ENCODE measurements at regions of chr17 and their contacts with region 1.

Region 1: GRCh38 chr17:14300575-14301278 is at the start of gene HS3ST3B1:
- H3K4me3 Mint-ChIP-seq: peak within 1 kb of the TSS; percentile 85
- H3K27ac Mint-ChIP-seq: peak within 1 kb of the TSS; percentile 77
- H3K4me1 Mint-ChIP-seq: peaks cover 62% of the 10 kb centered on the region
- H3K27me3 Mint-ChIP-seq: peaks cover 64% of the 10 kb centered on the region

Region 2: DNA sequence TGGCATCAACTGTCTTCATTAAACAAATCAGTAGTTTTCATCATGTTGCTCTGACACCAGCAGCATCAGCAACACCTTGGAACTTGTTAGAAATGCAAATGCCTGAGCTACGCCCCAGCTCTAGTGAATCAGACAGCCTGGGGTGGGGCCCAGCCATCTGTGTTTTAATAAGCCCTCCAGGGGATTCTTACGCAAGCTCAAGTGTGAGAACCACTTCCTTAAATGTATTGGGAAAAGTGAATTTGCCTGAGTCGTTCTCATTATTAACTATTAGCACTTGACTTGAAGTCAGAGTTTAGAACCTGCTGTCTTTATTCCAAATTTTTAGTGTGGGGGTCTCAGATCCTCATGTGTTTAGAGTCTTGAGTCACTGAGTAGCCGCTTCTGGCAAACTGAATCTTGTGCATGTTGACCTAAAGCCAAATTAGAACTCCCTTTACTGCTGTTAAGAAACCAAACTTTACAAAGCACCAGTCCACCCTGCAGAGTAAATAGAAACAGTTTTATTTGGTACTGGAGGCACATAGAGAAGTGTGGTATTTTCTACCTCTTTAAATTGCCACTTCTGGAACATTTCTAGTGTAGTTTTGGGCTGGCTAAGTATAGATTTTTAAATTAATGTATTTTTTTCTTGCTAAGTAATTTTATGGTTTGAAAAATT is 368.8 kb before region 1 on chr17:
- intact Hi-C with region 1: loop called (anchors 2 kb)
- H3K4me3 Mint-ChIP-seq: no peak overlapping the region
- H3K27ac Mint-ChIP-seq: peak overlapping the region; percentile 91
- H3K4me1 Mint-ChIP-seq: peaks cover 40% of the 10 kb centered on the region
- H3K27me3 Mint-ChIP-seq: no peaks in the 10 kb centered on the region

Region 3: DNA sequence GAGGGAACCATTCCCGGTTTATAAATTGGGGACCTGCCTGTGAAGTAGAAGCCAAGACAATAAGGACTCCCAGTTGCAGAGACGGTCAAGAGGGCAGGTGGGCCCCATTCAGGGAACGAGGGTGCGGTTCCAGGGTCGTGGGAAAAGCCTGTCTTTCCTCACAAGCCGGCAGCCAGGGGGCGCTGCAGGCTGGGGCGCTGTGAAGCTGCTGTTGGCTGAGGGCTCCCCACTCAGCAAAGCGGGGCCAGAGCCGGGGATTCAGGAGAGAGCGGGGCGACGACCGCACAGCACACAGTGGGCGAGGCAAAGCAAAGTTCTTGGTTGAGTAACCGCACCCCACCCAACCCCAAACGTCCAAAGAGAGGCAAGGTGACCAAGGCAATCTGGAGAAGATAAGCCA is 88.9 kb before region 1 on chr17:
- intact Hi-C with region 1: loop called (anchors 5 kb)
- H3K4me3 Mint-ChIP-seq: no peak overlapping the region
- H3K27ac Mint-ChIP-seq: no peak overlapping the region
- H3K4me1 Mint-ChIP-seq: peaks cover 29% of the 10 kb centered on the region
- H3K27me3 Mint-ChIP-seq: peaks cover 2% of the 10 kb centered on the region

Region 4: DNA sequence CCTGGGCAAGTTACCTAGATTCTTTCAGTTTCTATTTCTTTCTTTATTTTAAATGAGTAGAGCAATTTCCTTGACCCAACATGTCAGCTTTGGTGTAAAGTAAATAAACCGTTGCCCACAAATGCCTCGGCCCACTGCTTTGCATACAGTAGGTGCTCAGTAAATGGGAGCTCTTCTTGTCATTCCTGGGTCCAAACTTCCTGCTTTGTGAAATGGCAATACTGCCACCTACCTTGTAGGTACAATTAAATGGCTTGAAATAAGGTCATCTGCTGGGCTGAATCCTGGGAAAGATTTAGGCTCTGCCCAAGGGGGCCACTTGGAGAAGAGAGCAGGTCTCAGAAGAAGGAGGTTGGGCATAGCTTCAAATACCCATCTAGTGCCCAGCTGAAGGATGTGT is 253.1 kb after region 1 on chr17:
- intact Hi-C with region 1: loop called (anchors 5 kb)
- H3K4me3 Mint-ChIP-seq: no peak overlapping the region
- H3K27ac Mint-ChIP-seq: no peak overlapping the region
- H3K4me1 Mint-ChIP-seq: peaks cover 23% of the 10 kb centered on the region
- H3K27me3 Mint-ChIP-seq: peaks cover 1% of the 10 kb centered on the region

Region 5: GRCh38 chr17:14748031-14748710 is 447.4 kb after region 1 on chr17:
- intact Hi-C with region 1: loop called (anchors 10 kb)
- H3K4me3 Mint-ChIP-seq: no peak overlapping the region
- H3K27ac Mint-ChIP-seq: peak overlapping the region; percentile 43
- H3K4me1 Mint-ChIP-seq: peaks cover 44% of the 10 kb centered on the region
- H3K27me3 Mint-ChIP-seq: no peaks in the 10 kb centered on the region

Region 6: DNA sequence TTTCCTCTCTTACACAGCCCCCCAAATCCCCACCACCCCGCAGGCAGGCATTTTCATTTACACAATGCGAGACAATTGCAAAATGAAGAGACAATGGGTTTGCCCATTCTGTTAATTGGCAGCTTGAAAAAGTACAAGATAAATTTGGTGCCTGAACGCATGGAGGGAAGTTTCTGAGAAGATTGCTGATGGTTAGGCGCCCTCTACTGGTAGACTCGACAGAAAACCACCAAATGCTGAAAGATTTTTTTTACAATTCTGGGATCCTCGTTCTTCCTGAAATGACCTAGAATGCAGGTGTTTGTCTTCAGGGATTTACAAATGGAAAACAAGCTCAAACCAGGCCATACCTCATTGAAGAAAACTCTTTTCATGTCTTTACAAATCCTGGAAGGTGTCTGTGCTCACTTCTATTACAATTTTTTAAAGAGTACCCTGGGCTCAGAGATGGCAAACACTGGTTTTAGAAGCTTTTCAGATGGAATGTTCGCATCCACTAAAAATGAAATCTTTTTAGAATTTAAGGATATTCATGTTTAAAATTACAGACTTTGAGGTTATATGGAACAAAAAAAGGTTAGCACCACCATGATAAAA is 625.9 kb after region 1 on chr17:
- intact Hi-C with region 1: loop called (anchors 5 kb)
- H3K4me3 Mint-ChIP-seq: no peak overlapping the region
- H3K27ac Mint-ChIP-seq: no peak overlapping the region
- H3K4me1 Mint-ChIP-seq: no peaks in the 10 kb centered on the region
- H3K27me3 Mint-ChIP-seq: no peaks in the 10 kb centered on the region

Measured in dendritic cell treated with granulocyte-macrophage colony-stimulating factor and Interleukin-4, amounts not matched to agents 40 ng/mL and 50 ng/mL, for 4 days (primary cell).